HCT116 (cell line): ENCODE measurements at regions of chr10 and their contacts with region 1.

Region 1: GRCh38 chr10:119859420-119860258 is 13.0 kb downstream of the MCMBP start:
- DNase-seq: peak; percentile 59
- ATAC-seq: peak; percentile 69
- H3K4me3 ChIP-seq: no peak overlapping the region
- H3K27ac ChIP-seq: no peak overlapping the region
- H3K4me1 ChIP-seq: no peaks in the 10 kb centered on the region
- H3K27me3 ChIP-seq: no peaks in the 10 kb centered on the region
- CTCF ChIP-seq: peak; percentile 60 to 93 (median 91)
- POLR2A ChIP-seq: no peak
- RAD21 ChIP-seq: peak; percentile 93

Region 2: GRCh38 chr10:119686439-119687191 is 173.0 kb before region 1 on chr10:
- CTCF ChIA-PET with region 1: interaction called, 16 read pairs
- POLR2A ChIA-PET with region 1: interaction called, 3 read pairs
- RAD21 ChIA-PET with region 1: no interaction called
- intact Hi-C with region 1: loop called (anchors 1 kb)
- DNase-seq: peak; percentile 75
- ATAC-seq: peak; percentile 88
- H3K4me3 ChIP-seq: no peak overlapping the region
- H3K27ac ChIP-seq: no peak overlapping the region
- H3K4me1 ChIP-seq: peaks cover 11 to 24% of the 10 kb centered on the region in 2 experiments
- H3K27me3 ChIP-seq: no peaks in the 10 kb centered on the region
- CTCF ChIP-seq: peak; percentile 90 to 99 (median 90)
- POLR2A ChIP-seq: no peak
- RAD21 ChIP-seq: peak; percentile 99

Region 3: DNA sequence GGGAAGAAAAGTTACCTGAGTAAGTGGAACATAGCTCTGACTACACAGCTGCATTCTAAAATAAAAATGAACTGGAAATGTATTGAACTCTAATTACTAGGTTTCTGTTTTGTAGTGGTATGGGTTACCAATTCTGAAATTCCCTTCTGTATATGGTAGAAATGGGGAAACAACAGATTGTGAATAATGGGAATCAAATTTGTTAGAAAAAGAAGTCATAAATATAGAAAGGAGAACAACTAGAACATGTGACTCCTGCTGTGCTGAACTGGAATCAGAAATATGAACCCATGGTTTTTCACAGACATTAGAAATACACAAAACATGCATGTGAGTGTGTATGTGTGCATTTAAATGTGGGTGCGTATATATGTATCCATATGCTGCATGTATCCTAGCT is 14.0 kb before region 1 on chr10:
- CTCF ChIA-PET with region 1: interaction called, 11 read pairs
- POLR2A ChIA-PET with region 1: no interaction called
- RAD21 ChIA-PET with region 1: no interaction called
- intact Hi-C with region 1: no loop called
- DNase-seq: no peak
- ATAC-seq: no peak
- H3K4me3 ChIP-seq: no peak overlapping the region
- H3K27ac ChIP-seq: no peak overlapping the region
- H3K4me1 ChIP-seq: 0 out of 4 replicates have a peak, but pooled peaks cover 0 to 6% of the 10 kb centered on the region in 2 experiments
- H3K27me3 ChIP-seq: no peaks in the 10 kb centered on the region
- CTCF ChIP-seq: no peak
- POLR2A ChIP-seq: no peak
- RAD21 ChIP-seq: no peak

Region 4: DNA sequence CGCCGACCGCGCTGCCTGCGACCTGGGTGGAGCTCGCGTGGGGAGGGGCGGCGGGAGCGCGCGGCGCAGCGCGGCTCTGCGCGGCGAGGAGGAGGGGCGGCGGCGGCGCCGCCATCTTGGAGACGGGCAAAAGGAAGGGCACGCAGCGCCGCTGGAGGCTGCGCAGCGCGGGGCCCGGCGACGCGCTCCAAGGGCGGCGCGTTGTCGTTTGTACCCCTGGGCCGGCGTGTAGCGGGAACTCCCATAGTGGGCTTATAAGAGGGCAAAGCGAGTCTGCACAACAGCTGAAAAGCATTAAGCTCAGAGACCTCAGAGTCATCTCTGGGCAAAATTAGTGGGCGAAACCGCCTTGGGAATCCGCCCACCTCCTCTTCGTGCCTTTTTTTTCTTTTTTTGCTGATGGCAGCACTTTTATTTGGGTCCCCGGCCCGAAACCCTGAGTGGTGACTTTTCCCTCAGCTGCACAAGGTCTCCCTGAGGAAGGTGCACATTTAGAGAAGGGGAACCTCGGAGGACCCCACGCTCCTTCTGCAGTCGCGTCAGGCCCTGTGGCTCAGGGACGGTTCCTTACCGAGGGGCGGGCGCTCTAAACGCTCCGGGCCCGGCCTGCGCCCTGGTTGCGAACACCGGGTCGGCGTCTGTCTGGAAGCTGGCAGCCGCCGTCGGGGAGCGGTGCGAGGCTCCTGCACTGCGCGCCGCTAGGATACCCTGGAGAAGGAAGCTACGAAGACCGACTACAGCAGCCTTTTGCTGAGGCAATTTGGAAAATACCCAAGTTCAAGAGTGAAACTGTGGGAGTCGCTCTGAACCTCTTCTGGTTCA is 13.4 kb after region 1 on chr10:
- CTCF ChIA-PET with region 1: interaction called, 22 read pairs
- POLR2A ChIA-PET with region 1: interaction called, 5 read pairs
- RAD21 ChIA-PET with region 1: no interaction called
- intact Hi-C with region 1: no loop called
- DNase-seq: peak; percentile 84
- ATAC-seq: peak; percentile 93
- H3K4me3 ChIP-seq: peak overlapping the region; percentile 69 to 76
- H3K27ac ChIP-seq: peak overlapping the region; percentile 90
- H3K4me1 ChIP-seq: peaks cover 13 to 23% of the 10 kb centered on the region in 2 experiments
- H3K27me3 ChIP-seq: no peaks in the 10 kb centered on the region
- CTCF ChIP-seq: 0 out of 6 replicates have a peak, but pooled peaks of 1 of the 3 experiments have one; percentile 2
- POLR2A ChIP-seq: peak; percentile 56
- RAD21 ChIP-seq: no peak

Region 5: GRCh38 chr10:120069700-120070099 is 210.1 kb after region 1 on chr10:
- CTCF ChIA-PET with region 1: no interaction called
- POLR2A ChIA-PET with region 1: no interaction called
- RAD21 ChIA-PET with region 1: no interaction called
- intact Hi-C with region 1: no loop called
- DNase-seq: no peak
- ATAC-seq: no peak
- H3K4me3 ChIP-seq: no peak overlapping the region
- H3K27ac ChIP-seq: no peak overlapping the region
- H3K4me1 ChIP-seq: no peaks in the 10 kb centered on the region
- H3K27me3 ChIP-seq: peaks cover 30% of the 10 kb centered on the region
- CTCF ChIP-seq: no peak
- POLR2A ChIP-seq: no peak
- RAD21 ChIP-seq: no peak